ENCODE measurements at regions of chr7 and their contacts with region 1.

Region 1: DNA sequence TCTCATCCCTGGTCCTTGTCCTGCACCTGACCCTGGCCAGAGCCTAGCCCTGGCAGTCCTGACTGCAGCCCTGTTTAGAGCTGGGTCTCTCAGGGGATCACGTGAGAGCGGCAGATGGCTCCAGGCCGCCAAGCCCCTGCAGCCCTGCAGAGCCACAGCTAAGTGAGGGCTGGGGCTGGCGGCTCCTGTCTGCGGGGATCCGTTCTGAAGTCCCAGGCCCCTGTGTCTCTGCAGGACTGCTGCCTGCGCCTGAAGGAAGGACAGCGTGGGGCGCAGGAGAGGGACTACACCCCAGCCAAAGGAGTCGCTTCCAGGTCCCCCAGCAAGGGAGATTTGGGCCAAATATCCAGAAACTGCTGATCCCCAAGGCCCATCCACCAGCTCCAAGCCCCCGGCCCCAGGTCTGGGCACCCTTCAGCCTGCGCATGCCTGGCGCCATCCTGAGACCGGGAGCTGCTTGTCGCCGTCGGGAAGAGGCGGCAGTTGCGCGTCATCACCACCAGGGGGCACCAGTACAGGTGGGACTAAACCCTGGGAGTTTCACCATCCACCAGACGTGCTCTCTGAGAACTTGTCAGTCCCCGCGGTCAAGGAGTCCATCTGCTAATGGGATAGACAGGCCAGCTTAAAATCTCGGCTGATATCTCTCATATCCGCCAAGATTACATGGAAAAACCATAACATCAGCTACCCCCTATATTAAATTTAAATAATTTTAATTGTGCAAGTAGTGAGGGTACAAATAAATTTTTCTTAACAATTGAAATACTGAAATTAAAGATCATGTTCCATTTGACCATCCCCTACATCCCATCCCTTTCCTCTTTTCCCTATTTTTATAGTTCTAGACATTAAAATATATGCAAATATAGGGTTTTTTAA is 25.1 kb upstream of the GHRHR start:
- DNase-seq: peak; percentile 98
- ATAC-seq: peak; percentile 95
- H3K4me3 Mint-ChIP-seq: peak overlapping the region; percentile 47
- H3K27ac Mint-ChIP-seq: no peak overlapping the region
- H3K4me1 Mint-ChIP-seq: 0 out of 2 replicates have a peak, but pooled peaks cover 4% of the 10 kb centered on the region
- H3K27me3 Mint-ChIP-seq: no peaks in the 10 kb centered on the region; the same call in none of the 2 replicates
- CTCF ChIP-seq: peak; percentile 98

Region 2: DNA sequence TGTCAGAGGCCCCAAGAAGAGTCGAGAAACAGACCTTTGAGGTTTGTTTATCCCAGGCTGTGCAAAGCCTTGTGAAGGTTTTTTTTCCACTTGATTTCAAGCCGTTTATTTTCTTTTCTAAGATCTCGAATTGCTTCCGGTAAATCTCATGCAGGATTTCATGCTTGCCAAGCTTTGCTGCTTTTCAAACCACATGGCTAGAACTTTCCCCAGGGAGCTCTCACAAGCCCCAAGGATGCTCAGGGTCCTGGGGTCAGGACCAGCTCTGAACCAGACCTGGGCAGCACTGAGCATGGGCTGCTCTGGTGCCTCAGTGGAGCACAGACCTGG is 75.0 kb before region 1 on chr7:
- CTCF ChIA-PET with region 1: interaction called, 11 read pairs
- POLR2A ChIA-PET with region 1: no interaction called
- DNase-seq: no peak
- ATAC-seq: no peak
- H3K4me3 Mint-ChIP-seq: no peak overlapping the region
- H3K27ac Mint-ChIP-seq: peak overlapping the region; percentile 15; the same call in 1 of the 2 replicates
- H3K4me1 Mint-ChIP-seq: no peaks in the 10 kb centered on the region
- H3K27me3 Mint-ChIP-seq: no peaks in the 10 kb centered on the region
- CTCF ChIP-seq: no peak

Region 3: DNA sequence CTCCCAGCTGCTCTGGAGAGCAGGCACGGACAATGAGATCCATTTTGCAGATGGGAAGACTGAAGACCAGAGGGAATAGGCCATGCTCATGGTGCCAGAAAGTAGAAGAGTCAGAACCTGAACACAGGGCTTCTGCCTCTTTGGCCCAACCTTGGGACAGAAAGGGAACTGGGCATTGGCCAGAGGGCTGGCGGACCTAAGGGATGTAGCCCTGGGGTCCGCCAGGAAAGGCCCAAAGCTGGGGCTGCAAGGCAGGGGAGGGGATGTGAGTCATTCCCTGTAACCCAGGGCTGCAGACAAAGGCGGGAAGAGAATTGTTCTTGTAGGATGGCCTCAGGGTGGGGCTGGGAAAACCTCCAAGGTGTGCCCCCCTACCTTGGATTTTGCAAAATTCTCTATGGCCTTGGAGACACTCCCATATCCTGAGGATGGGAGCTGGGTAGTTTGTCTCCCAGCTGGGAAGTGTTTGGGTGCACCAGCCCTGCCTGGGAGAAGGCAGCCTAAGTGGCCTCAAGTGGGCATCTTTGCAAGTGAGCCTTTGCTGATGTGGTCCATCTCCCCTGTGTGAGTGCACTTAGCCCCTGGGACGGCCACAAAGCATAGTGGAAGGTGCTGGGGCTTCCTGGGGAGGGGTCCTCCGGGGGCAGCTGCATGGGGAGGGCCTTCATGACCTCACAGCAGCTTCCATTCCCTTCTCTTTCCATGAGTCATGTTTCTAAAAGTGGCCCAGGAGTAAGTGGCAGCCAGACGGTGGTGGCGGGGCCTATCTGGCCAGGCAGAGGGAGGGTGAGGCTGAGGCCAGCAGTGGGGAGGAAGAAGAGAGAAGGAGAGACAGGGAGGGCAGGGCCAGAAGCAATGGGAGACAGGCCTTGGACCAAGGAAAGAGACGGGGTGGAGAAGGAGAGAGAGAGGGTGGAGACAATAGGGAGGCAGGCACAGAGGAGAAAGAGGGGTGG is 17.8 kb before region 1 on chr7:
- CTCF ChIA-PET with region 1: interaction called, 23 read pairs
- POLR2A ChIA-PET with region 1: no interaction called
- DNase-seq: peak; percentile 2
- ATAC-seq: no peak
- H3K4me3 Mint-ChIP-seq: no peak overlapping the region
- H3K27ac Mint-ChIP-seq: no peak overlapping the region
- H3K4me1 Mint-ChIP-seq: 0 out of 2 replicates have a peak, but pooled peaks cover 7% of the 10 kb centered on the region
- H3K27me3 Mint-ChIP-seq: no peaks in the 10 kb centered on the region
- CTCF ChIP-seq: no peak

Region 4: GRCh38 chr7:30974605-30975255 is 36.1 kb after region 1 on chr7:
- CTCF ChIA-PET with region 1: interaction called, 107 read pairs
- POLR2A ChIA-PET with region 1: interaction called, 8 read pairs
- DNase-seq: peak; percentile 82
- ATAC-seq: peak; percentile 86
- H3K4me3 Mint-ChIP-seq: no peak overlapping the region
- H3K27ac Mint-ChIP-seq: no peak overlapping the region
- H3K4me1 Mint-ChIP-seq: peaks cover 8% of the 10 kb centered on the region
- H3K27me3 Mint-ChIP-seq: no peaks in the 10 kb centered on the region; the same call in 1 of the 2 replicates
- CTCF ChIP-seq: peak; percentile 90

Region 5: GRCh38 chr7:31058122-31058521 is 119.4 kb after region 1 on chr7:
- CTCF ChIA-PET with region 1: interaction called, 21 read pairs
- POLR2A ChIA-PET with region 1: no interaction called
- DNase-seq: no peak
- ATAC-seq: no peak
- H3K4me3 Mint-ChIP-seq: no peak overlapping the region
- H3K27ac Mint-ChIP-seq: no peak overlapping the region
- H3K4me1 Mint-ChIP-seq: peaks cover 34% of the 10 kb centered on the region
- H3K27me3 Mint-ChIP-seq: peaks cover 15% of the 10 kb centered on the region
- CTCF ChIP-seq: no peak

Region 6: DNA sequence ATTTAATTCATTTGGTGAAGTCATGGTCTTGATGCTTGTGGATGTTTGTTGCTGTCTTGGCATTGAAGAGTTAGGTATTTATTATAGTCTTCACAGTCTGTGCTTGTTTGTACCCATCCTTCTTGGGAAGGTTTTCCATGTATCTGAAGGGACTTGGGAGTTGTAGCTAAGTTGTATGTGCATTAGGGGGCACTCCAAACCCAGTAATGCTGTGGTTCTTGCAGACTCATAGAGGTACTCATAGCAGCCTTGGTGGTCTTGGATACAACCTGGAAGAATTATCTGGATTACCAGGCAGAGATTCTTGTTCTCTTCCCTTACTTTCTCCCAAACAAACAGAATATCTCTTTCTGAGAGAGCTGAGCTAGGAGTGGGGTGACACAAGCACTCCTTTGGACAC is 206.7 kb after region 1 on chr7:
- CTCF ChIA-PET with region 1: no interaction called
- POLR2A ChIA-PET with region 1: no interaction called
- DNase-seq: no peak
- ATAC-seq: peak; percentile 67
- H3K4me3 Mint-ChIP-seq: no peak overlapping the region
- H3K27ac Mint-ChIP-seq: no peak overlapping the region
- H3K4me1 Mint-ChIP-seq: no peaks in the 10 kb centered on the region
- H3K27me3 Mint-ChIP-seq: peaks cover 13% of the 10 kb centered on the region; the same call in 1 of the 2 replicates
- CTCF ChIP-seq: no peak

Region 7: DNA sequence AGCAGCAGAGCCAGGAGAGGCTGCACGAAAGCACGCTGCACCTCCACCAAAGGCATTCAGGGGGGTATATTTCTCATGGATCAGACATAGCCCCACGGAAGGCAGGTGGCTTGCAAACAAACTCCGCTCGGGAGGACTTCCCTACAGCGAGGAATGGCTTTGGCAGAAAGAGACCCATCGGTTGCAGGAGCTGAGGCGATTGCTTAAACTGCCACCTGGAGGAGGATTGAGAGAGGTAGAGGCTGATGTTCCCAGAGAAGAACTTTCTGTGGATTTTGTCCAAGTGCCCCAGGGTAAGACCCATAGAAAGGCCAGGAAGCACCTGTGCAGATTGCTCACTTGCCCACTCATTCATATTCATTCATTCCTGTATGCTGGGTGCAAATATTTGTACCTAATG is 312.8 kb after region 1 on chr7:
- CTCF ChIA-PET with region 1: no interaction called
- POLR2A ChIA-PET with region 1: no interaction called
- DNase-seq: no peak
- ATAC-seq: peak; percentile 65
- H3K4me3 Mint-ChIP-seq: no peak overlapping the region
- H3K27ac Mint-ChIP-seq: no peak overlapping the region
- H3K4me1 Mint-ChIP-seq: peaks cover 32% of the 10 kb centered on the region
- H3K27me3 Mint-ChIP-seq: no peaks in the 10 kb centered on the region
- CTCF ChIP-seq: no peak

Measured in WTC11 (cell line).